Common myeloid progenitor, CD34-positive (primary cell): ENCODE measurements at regions of chr2 and their contacts with region 1.

Region 1: DNA sequence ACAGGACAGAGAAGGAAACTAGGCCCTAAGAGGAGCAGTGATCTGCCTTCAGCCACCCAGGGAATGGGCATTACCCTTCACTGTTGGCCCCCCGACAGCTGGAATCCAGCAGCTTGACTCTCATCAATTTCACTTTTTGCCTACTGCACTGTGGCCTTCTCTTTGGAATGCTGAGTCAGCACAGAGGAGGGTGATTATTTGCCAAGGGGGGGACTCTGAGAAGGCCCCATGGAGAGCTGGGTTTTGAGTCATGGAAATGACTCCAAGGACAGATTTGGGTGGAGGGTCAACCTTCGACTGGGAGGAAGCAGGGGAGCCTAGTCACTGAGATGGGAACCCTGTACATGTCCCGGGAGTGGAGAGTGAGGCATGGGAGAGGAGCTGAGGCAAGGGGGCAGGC is 38.1 kb upstream of the NTSR2 start:
- DNase-seq: no peak
- H3K4me3 ChIP-seq: no peak overlapping the region
- H3K27ac ChIP-seq: no peak overlapping the region
- H3K4me1 ChIP-seq: peaks cover 0 to 10% (median 0%) of the 10 kb centered on the region in 4 experiments
- H3K27me3 ChIP-seq: no peaks in the 10 kb centered on the region

Region 2: GRCh38 chr2:11681722-11682589 is 26.1 kb before region 1 on chr2:
- CTCF ChIA-PET with region 1: interaction called, 10 read pairs
- POLR2A ChIA-PET with region 1: no interaction called
- DNase-seq: peak; percentile 31 to 46 (median 45)
- H3K4me3 ChIP-seq: no peak overlapping the region
- H3K27ac ChIP-seq: no peak overlapping the region
- H3K4me1 ChIP-seq: no peaks in the 10 kb centered on the region
- H3K27me3 ChIP-seq: peaks cover 0 to 36% (median 18%) of the 10 kb centered on the region in 5 experiments

Region 3: DNA sequence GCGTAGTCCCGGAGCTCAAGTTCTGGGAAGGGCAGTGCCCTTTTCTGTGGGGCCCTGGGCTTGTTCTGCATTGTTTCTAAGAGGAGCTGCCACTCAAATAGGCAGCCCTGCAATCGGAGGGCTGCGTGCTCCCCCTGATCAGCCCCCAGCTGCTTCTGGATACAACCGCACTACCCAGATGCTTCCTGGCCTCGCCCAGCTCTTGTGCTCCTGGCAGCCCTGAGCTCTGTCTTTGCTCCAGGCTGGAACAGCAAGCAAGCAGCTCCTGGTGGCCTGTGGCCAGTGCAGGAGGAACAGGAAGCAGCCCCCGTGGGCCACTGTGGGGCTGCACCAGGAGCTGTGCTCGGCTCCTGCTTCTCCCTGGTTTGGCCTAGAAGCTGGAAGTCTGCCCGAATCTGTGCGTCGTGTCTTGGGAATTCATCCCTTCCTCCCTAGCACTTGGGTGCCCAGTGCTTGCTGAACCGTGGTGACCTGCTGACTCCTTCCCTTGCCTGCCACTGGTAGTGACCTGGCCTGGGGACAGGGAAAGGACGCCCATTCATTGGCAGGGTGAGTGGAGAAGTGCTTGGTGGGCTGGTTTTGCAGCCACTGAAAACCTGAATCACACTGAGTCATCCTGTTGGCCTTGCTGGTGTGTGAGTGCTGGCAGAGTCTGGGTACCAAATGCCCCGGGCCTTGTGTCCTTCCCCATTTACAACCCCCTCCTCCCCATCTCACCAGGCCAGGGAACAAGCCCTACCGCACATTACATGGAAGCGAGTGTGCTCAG is 10.8 kb before region 1 on chr2:
- CTCF ChIA-PET with region 1: interaction called, 14 read pairs
- POLR2A ChIA-PET with region 1: interaction called, 3 read pairs
- DNase-seq: peak; percentile 87 to 98 (median 97)
- H3K4me3 ChIP-seq: peak overlapping the region in 4 of 7 experiments; percentile 28 to 51 (median 48)
- H3K27ac ChIP-seq: peak overlapping the region in 1 of 2 experiments; percentile 53
- H3K4me1 ChIP-seq: peaks cover 0 to 69% (median 53%) of the 10 kb centered on the region in 4 experiments
- H3K27me3 ChIP-seq: no peaks in the 10 kb centered on the region

Region 4: DNA sequence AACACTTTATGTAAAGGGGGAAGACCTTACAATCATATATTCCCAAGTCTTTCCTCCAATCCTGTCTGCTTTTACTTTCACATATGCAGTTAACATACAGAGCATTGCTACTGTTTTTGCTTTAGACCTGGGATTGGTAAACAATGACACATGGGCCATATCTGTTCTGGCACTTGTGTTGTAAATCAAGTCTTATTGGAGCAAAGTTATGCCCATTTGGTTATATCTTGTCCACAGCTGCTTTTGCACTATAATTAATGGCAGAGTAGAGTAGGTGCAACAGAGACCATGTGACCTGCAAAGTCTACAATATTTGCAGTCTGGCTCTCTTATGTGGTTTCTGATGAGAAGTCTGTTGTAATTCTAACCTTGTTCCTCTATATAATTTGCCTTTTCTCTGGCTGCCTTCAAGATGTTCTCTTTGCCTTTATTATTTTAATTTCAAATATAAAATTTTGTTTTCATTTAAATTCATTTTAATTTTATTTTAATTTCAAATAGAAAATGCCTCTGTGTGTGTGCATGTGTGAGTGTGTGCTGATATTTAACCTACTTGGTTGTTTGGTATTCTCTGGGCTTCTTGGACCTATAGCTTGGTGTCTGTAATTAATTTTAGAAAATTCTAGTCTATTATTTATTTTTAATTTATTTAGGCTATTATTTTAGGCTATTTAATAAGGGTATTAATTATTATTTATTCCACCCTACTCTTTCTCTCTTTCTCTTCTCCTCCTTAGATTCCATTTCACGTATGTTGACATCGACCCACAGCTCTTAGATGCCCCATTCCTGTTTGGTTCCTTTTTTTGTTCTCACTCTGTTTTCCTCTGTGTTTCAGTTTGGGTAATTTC is 21.5 kb after region 1 on chr2:
- CTCF ChIA-PET with region 1: no interaction called
- POLR2A ChIA-PET with region 1: no interaction called
- DNase-seq: peak in 1 of 3 donors; percentile 39
- H3K4me3 ChIP-seq: no peak overlapping the region
- H3K27ac ChIP-seq: no peak overlapping the region
- H3K4me1 ChIP-seq: peaks cover 0 to 11% (median 0%) of the 10 kb centered on the region in 4 experiments
- H3K27me3 ChIP-seq: no peaks in the 10 kb centered on the region